ENCODE measurements at regions of chrX and their contacts with region 1.

Region 1: GRCh38 chrX:132226169-132226568 is 6.9 kb upstream of the RAP2C start:
- DNase-seq: no peak
- CTCF ChIP-seq: peak; percentile 50

Region 2: GRCh38 chrX:131841496-131842410 is 384.4 kb before region 1 on chrX:
- in situ Hi-C with region 1: loop called (anchors 10 kb)
- DNase-seq: peak; percentile 74
- CTCF ChIP-seq: peak; percentile 86

Region 3: GRCh38 chrX:132101799-132102198 is 124.4 kb before region 1 on chrX:
- in situ Hi-C with region 1: no loop called
- DNase-seq: no peak
- CTCF ChIP-seq: no peak

Region 4: DNA sequence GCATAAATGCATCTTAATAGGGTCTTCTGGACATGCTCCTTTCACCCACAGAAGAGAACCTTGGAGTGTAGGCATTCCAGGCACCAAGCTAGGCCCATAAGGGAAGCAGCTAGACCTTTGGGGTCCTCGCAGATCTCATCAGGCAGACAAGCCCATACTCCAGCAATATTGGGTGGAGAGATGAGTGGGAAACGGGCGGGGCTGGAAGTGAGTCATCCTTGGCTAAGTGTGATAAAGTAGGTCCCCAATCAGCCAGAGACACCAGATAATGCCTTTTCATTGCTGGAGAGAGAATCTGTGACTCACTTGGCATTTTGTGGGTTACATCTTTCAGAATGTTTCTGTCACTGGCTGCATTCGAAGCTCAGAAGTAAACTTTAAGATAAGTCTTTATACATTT is 396.0 kb after region 1 on chrX:
- in situ Hi-C with region 1: loop called (anchors 10 kb)
- DNase-seq: no peak
- CTCF ChIP-seq: no peak